Prostate gland (tissue), 2 donors: ENCODE measurements at regions of chr1 and their contacts with region 1.

Region 1: GRCh38 chr1:234676103-234676594 is 66.2 kb upstream of the IRF2BP2 start:
- DNase-seq: peak; percentile 33
- H3K4me3 ChIP-seq: no peak overlapping the region
- H3K27ac ChIP-seq: no peak overlapping the region
- H3K4me1 ChIP-seq: no peaks in the 10 kb centered on the region
- H3K27me3 ChIP-seq: no peaks in the 10 kb centered on the region
- CTCF ChIP-seq: no peak
- POLR2A ChIP-seq: no peak

Region 2: DNA sequence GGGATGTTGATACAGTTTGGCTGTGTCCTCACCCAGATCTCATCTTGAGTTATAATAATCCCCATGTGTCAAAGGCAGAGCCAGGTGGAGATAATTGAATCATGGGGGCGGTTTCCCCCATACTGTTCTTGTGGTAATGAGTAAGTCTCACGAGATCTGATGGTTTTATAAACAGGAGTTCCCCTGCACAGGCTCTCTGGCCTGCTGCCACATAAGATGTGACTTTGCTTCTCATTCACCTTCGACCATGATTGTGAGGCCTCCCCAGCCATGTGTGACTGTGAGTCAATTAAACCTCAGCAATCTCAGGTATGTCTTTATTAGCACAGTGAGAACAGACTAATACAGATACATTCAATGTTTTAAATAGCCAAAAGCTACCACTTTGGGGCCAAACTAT is 730.6 kb before region 1 on chr1:
- intact Hi-C with region 1: no loop called
- DNase-seq: no peak
- H3K4me3 ChIP-seq: no peak overlapping the region
- H3K27ac ChIP-seq: no peak overlapping the region
- H3K4me1 ChIP-seq: no peaks in the 10 kb centered on the region
- H3K27me3 ChIP-seq: no peaks in the 10 kb centered on the region
- CTCF ChIP-seq: no peak
- POLR2A ChIP-seq: no peak

Region 3: GRCh38 chr1:234621657-234622335 is 54.4 kb before region 1 on chr1:
- intact Hi-C with region 1: loop called (anchors 10 kb)
- DNase-seq: no peak
- H3K4me3 ChIP-seq: no peak overlapping the region
- H3K27ac ChIP-seq: no peak overlapping the region
- H3K4me1 ChIP-seq: no peaks in the 10 kb centered on the region
- H3K27me3 ChIP-seq: no peaks in the 10 kb centered on the region
- CTCF ChIP-seq: no peak
- POLR2A ChIP-seq: no peak

Region 4: GRCh38 chr1:234645474-234645953 is 30.6 kb before region 1 on chr1:
- intact Hi-C with region 1: no loop called
- DNase-seq: no peak
- H3K4me3 ChIP-seq: no peak overlapping the region
- H3K27ac ChIP-seq: no peak overlapping the region
- H3K4me1 ChIP-seq: no peaks in the 10 kb centered on the region
- H3K27me3 ChIP-seq: no peaks in the 10 kb centered on the region
- CTCF ChIP-seq: no peak
- POLR2A ChIP-seq: no peak

Region 5: GRCh38 chr1:234823191-234824176 is 147.3 kb after region 1 on chr1:
- intact Hi-C with region 1: no loop called
- DNase-seq: no peak
- H3K4me3 ChIP-seq: no peak overlapping the region
- H3K27ac ChIP-seq: no peak overlapping the region
- H3K4me1 ChIP-seq: no peaks in the 10 kb centered on the region
- H3K27me3 ChIP-seq: no peaks in the 10 kb centered on the region
- CTCF ChIP-seq: no peak
- POLR2A ChIP-seq: no peak

Region 6: DNA sequence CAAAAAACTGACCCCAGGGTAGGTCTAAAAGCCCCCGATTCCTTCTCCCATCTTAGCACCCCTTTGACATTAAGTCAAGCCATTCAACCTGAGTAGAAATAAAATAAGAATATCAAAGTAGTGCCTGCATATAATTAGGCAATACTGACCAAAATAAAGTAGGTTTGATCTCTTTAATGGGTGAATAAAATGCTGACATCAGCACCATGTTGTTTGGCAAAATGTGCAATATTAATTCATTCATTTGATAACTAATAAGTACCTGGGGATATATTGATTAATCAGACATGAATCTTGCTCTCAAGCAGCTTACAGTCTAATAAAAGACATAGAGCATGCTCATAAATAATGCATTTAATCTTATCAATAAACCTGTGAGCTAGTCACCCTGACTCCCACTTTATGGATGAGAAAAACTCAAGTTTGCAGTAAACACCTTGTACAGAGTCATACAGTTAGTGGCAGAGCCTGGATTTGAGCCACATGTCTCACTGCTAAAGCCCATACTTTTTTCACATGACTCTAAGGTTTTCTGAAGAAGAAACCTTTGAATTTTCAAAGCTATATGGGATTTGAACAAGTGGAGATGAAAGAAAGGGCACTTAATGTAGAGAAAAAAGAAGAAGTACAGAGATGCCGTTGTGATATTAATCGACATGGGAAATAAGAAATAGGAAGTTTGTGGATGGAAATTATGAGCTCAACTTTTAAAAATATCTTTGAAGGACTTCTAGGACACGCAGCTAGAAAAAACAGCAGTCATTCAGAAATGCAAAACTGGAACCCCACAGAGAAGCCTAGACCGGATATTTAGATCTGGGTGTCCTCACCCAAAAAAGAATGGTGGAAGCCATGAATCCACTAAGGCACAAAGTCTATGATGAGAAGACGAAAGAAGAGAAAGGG is 268.5 kb after region 1 on chr1:
- intact Hi-C with region 1: no loop called
- DNase-seq: no peak
- H3K4me3 ChIP-seq: no peak overlapping the region
- H3K27ac ChIP-seq: no peak overlapping the region
- H3K4me1 ChIP-seq: no peaks in the 10 kb centered on the region
- H3K27me3 ChIP-seq: no peaks in the 10 kb centered on the region
- CTCF ChIP-seq: no peak
- POLR2A ChIP-seq: no peak

Region 7: DNA sequence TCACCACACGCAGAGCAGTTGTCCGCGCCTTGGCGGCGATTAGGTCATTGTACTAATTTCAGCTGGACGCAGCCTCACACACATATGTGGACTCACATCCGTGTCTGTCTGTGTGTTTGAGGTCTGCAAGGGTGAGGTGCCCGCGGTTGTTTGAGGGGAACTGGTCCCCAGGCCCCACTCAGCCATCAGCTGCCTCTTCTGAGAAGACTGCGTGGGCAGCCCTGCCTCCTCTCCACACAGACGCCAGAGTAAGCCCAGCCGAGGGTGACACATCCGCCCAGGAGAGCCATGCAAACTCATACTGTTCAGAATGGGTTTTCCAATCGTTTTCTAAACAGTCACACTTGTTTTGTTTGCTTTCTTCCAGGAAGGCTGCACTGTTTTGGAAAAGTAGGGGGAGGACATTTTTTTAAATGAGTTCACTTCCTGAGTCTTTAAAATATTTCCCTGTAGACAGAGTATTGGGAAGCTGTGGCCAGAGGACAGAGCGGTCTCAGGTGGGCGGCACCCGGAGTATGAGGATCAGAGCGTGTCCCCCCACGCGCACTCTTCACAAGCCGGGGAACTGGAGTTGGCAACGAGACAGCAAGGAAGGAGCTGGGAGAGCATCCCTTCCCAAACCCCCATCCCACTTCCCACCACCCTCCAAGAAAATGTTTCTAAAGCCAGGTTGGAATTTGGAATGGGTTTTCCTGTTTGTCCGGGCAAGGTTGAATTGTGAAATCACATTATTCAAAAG is 399.2 kb after region 1 on chr1:
- intact Hi-C with region 1: loop called (anchors 5 kb)
- DNase-seq: peak; percentile 42
- H3K4me3 ChIP-seq: no peak overlapping the region
- H3K27ac ChIP-seq: peak overlapping the region; percentile 85 to 90
- H3K4me1 ChIP-seq: peaks cover 25% of the 10 kb centered on the region
- H3K27me3 ChIP-seq: no peaks in the 10 kb centered on the region
- CTCF ChIP-seq: no peak
- POLR2A ChIP-seq: no peak